Head of caudate nucleus (tissue), 42 donors: ENCODE measurements at regions of chr15 and their contacts with region 1.

Region 1: GRCh38 chr15:67521029-67521811 is at the start of gene C15orf61:
- DNase-seq: peak; percentile 57 to 93 (median 86)

Region 2: DNA sequence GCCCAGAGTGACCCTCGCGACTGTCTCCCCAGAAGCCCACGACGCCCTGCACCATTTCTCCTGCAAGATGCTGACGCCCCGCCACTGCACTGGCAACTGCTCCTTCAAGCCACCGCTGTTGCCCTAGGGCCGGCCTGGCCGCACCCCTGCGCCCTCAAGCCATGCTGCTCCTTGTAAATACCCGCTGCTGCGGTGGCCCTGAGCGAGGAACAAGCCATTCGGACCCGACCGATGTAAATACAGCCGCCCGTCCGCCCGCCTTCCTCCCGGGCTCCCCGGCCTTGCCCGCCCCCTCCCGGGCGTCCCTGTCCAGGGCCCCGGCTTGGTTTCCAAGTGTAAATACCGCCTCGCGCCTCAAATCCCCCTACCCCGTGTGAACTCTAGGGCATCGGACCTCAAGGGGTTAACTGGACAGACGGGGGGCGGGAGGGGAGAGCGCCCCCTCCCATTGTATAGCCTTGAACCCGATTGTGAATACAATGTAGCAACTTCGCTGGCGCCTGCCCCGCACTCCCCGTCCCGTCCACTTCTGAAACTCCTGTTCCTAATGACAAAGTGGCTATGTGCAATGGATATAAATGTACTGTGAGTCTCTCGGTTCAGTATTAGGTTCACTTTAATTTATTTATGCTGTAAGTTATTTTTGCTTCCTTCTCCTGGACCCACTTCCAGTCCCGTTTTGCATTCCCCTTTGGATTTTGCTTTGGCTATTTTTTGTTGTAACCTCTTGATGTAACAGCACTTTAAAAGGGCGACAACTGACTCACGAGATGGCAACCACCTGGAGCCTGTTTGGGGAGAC is 312.7 kb after region 1 on chr15:
- intact Hi-C with region 1: loop called (anchors 5 kb)
- DNase-seq: peak in 8 of 42 donors; percentile 18 to 58 (median 46)